Activated CD4-positive, alpha-beta T cell treated with anti-CD3 and anti-CD28 coated beads, Interleukin-2, amount 10 ng/mL, durations not matched to agents 7 days and 5 days (primary cell): ENCODE measurements at regions of chr14 and their contacts with region 1.

Region 1: DNA sequence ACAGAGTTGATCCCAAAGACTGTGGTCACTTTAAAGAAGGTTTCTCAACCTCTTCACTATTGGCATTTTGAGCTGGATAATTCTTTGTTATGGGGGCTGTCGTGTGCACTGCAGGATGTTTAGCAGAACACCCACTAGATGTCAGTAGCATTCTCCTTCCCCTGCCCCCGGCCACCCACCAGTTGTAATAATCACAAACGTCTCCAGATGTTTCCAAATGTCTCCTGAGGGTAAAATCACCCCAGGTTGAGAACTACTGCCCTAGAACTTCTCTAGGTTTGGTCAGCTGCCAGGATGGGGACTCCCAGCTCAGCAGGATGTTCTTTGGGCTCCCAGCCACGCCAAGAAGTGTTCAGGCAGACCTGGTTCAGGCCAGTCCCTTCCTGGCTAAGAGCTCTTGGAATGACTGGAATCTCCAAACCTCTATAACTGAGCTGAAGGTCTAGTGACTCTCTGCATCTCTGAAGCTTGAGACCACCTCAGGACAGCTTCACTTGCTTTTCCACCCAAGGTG is 12.5 kb upstream of the AJUBA start:
- DNase-seq: peak; percentile 45
- H3K4me3 Mint-ChIP-seq: no peak overlapping the region
- H3K27ac Mint-ChIP-seq: no peak overlapping the region
- H3K4me1 Mint-ChIP-seq: no peaks in the 10 kb centered on the region
- H3K27me3 Mint-ChIP-seq: no peaks in the 10 kb centered on the region

Region 2: GRCh38 chr14:23006544-23007419 is 12.0 kb after region 1 on chr14:
- CTCF ChIA-PET with region 1: interaction called, 25 read pairs
- POLR2A ChIA-PET with region 1: interaction called, 3 read pairs
- DNase-seq: peak; percentile 98
- H3K4me3 Mint-ChIP-seq: peak overlapping the region; percentile 91
- H3K27ac Mint-ChIP-seq: peak overlapping the region; percentile 92
- H3K4me1 Mint-ChIP-seq: peaks cover 50% of the 10 kb centered on the region
- H3K27me3 Mint-ChIP-seq: no peaks in the 10 kb centered on the region

Region 3: DNA sequence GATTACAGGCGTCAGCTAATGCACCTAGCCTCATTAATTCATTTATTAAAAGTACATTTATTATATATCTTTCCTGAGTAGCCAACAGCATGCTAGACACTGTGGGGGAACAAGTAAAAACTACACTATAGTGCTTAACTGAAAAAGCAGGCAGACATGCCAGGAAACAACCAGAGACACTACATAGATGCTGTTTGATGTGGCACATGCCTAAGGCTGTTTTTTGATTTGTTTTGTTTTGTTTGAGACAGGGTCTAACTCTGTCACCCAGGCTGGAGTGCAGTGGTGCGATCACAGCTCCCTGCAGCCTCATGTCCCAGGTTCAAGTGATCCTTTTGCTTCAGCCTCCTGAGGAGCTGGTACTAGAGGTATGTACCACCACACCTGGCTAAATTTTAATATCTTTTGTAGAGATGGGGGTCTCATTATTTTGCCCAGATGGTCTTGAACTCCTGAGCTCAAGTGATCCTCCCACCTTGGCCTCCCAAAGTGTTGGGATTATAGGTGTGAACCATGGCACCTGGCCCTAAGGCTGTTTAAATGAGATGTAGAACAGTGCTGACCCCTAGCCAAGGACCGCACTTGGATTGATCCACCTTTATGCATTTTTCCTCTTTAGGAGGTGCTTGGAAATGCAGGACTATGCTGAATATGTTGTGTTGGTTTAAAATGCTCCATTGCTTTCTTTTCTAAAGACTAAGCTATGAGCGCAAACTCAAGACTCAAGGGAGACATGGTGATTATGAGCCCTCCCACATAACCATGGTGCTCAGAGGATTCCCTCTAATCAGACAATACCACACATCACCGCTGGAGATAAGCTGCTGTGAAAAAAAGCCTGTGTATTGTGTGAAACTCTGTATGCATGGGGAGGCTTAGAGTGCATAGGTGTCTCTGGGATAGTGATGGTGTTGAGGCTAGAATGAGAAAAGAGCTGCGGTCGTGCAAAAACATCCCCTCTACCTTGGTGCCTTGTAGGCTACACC is 25.6 kb after region 1 on chr14:
- CTCF ChIA-PET with region 1: no interaction called
- POLR2A ChIA-PET with region 1: no interaction called
- DNase-seq: no peak
- H3K4me3 Mint-ChIP-seq: no peak overlapping the region
- H3K27ac Mint-ChIP-seq: peak overlapping the region; percentile 87
- H3K4me1 Mint-ChIP-seq: peaks cover 52% of the 10 kb centered on the region
- H3K27me3 Mint-ChIP-seq: no peaks in the 10 kb centered on the region

Region 4: GRCh38 chr14:23041729-23042128 is 46.9 kb after region 1 on chr14:
- CTCF ChIA-PET with region 1: interaction called, 10 read pairs
- POLR2A ChIA-PET with region 1: no interaction called
- DNase-seq: no peak
- H3K4me3 Mint-ChIP-seq: no peak overlapping the region
- H3K27ac Mint-ChIP-seq: no peak overlapping the region
- H3K4me1 Mint-ChIP-seq: peaks cover under 1% of the 10 kb centered on the region
- H3K27me3 Mint-ChIP-seq: no peaks in the 10 kb centered on the region